Activated naive CD4-positive, alpha-beta T cell treated with anti-CD3 and anti-CD28 coated beads for 36 hours (primary cell): ENCODE measurements at regions of chr9 and their contacts with region 1.

Region 1: GRCh38 chr9:20884985-20885593 is 146.4 kb downstream of the HACD4 start:
- DNase-seq: peak; percentile 78
- H3K4me3 Mint-ChIP-seq: no peak overlapping the region
- H3K27ac Mint-ChIP-seq: no peak overlapping the region
- H3K4me1 Mint-ChIP-seq: no peaks in the 10 kb centered on the region
- H3K27me3 Mint-ChIP-seq: no peaks in the 10 kb centered on the region

Region 2: GRCh38 chr9:20872340-20872977 is 12.6 kb before region 1 on chr9:
- CTCF ChIA-PET with region 1: interaction called, 14 read pairs
- intact Hi-C with region 1: no loop called
- DNase-seq: no peak
- H3K4me3 Mint-ChIP-seq: no peak overlapping the region
- H3K27ac Mint-ChIP-seq: no peak overlapping the region
- H3K4me1 Mint-ChIP-seq: peaks cover 8% of the 10 kb centered on the region
- H3K27me3 Mint-ChIP-seq: no peaks in the 10 kb centered on the region

Region 3: GRCh38 chr9:20930836-20931235 is 45.7 kb after region 1 on chr9:
- CTCF ChIA-PET with region 1: no interaction called
- intact Hi-C with region 1: no loop called
- DNase-seq: no peak
- H3K4me3 Mint-ChIP-seq: no peak overlapping the region
- H3K27ac Mint-ChIP-seq: no peak overlapping the region
- H3K4me1 Mint-ChIP-seq: peaks cover 7% of the 10 kb centered on the region
- H3K27me3 Mint-ChIP-seq: no peaks in the 10 kb centered on the region

Region 4: GRCh38 chr9:21576331-21577189 is 691.5 kb after region 1 on chr9:
- CTCF ChIA-PET with region 1: no interaction called
- intact Hi-C with region 1: no loop called
- DNase-seq: peak; percentile 80
- H3K4me3 Mint-ChIP-seq: peak overlapping the region; percentile 3
- H3K27ac Mint-ChIP-seq: peak overlapping the region; percentile 68
- H3K4me1 Mint-ChIP-seq: peaks cover 37% of the 10 kb centered on the region
- H3K27me3 Mint-ChIP-seq: peaks cover 2% of the 10 kb centered on the region